Right ventricle myocardium inferior (tissue), 1 donor: ENCODE measurements at regions of chr10 and their contacts with region 1.

Region 1: GRCh38 chr10:72834183-72834825 is 59.2 kb upstream of the OIT3 start:
- DNase-seq: no peak
- ATAC-seq: peak; percentile 65

Region 2: DNA sequence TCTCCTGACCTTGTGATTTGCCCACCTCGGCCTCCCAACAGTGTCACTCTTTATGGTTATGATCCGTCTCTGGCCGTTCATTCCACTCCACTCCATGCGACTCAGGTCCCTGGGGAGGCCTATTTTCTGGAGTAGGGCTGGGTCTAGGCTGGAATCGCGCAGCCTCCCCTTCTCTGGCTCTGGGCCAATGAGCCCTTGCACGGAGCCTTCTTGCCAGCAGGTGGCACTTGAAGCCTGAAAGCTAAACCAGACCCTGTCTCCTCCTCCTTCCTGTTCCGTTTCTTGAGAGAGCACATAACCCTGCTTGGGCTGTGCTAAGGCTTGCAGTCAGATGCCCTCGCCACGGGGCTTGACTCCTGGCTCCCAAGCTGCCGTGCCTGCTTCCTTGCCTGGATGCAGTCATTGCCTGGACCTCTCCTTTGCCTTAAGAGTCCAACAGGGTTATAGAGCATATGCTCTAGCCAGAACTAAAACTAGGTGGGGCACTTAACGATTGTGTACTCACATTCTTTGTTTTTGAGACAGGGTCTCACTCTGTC is 470.0 kb before region 1 on chr10:
- intact Hi-C with region 1: loop called (anchors 1 kb)
- DNase-seq: peak; percentile 92
- ATAC-seq: peak; percentile 96

Region 3: GRCh38 chr10:72625608-72626443 is 208.5 kb before region 1 on chr10 and contains the start of gene MICU1:
- intact Hi-C with region 1: loop called (anchors 10 kb)
- DNase-seq: peak; percentile 97
- ATAC-seq: peak; percentile 100
- total RNA-seq, gene MICU1: 49.0 TPM

Region 4: DNA sequence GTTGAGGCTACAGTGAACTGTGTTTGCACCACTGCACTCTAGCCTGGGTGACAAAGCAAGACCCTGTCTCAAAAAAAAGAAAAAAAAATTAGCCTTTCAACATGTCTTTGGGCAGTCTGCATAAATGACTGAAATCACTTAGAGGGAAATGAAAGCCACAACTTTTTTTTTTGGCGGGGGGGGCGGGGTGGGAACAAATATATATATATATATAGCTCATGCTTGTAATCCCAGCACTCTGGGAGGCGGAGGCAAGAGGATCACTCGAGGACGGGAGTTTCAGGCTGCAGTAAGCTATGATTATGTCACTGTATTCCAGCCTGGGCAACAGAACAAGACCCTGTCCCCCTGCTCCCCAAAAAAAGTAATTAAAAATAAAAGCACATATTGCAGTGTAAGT is 185.0 kb before region 1 on chr10:
- intact Hi-C with region 1: no loop called
- DNase-seq: no peak
- ATAC-seq: no peak

Region 5: GRCh38 chr10:72692057-72692910 is 142.0 kb before region 1 on chr10 and contains the start of gene MCU:
- intact Hi-C with region 1: loop called (anchors 2 kb)
- DNase-seq: peak; percentile 98
- ATAC-seq: peak; percentile 99
- total RNA-seq, gene MCU: 15.1 TPM

Region 6: DNA sequence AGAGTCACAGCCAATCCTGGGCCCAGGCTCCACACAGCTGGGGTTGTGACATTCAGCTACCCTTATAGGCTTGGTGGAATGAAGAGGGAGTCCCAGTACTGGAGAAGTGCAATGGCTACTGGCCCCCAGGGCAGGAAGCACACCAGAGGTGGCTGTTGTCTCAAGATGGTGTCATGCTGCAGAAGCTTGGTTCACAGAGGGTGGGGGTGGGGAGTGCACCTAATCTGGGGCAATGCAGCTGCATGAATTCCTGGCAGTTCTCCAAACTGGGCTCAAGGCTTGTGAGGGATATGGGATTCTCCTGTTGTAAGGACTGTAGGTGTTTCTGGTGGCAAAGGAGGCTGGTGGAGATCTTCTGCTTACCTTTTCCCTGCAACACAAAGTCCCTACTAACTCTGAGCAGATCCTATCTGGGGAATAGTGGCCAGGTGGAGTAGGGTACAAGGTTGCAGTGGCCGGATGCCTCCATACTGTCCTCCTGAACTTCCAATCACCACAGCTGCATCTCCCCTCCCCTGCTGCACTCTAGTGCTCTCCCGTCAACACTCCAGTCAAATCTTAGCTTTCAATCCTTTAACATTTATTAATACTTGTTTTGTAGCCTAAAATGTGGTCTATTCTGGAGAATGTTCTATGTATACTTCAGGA is 147.7 kb after region 1 on chr10:
- intact Hi-C with region 1: no loop called
- DNase-seq: no peak
- ATAC-seq: peak; percentile 30